ENCODE measurements at regions of chr17 and their contacts with region 1.

Region 1: DNA sequence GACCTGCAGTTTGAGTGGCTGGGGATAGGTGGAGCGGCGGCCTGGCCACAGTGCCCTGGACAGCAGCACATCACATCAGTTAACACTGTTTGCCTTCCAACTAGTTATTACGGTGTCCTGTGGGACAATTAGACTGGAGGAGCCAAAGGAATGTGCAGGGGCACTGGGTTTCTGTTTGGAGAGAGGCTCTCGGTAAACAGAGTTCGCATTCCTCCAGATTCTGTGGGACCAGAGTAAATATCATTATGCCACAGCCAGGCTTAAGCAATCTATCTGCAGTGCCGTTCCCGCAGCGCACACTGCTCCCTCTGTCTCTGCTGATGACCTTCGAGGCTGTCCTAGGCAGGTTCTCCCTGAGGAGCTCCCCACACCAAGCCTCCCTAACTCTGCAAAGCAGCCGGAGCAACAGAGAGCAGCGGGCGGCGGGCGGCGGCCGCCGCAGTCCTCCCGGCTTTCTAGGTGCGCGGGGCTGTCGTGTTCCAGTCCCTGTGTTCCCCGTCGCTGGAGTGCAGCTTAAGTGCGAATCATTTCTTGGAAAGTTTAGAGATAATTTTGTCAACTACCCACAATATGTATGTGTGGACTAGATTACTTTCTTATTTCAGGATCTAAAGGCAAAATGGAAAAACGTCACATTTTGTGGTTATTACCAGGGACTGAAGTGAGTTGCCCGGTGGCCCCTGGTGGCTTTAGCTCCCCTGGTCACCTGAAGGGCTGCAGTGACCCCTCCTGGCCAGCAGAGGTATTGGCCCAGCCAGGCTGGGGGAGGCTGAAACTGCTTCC is 43.2 kb downstream of the PGS1 start:
- DNase-seq: peak; percentile 65 to 95
- H3K4me3 ChIP-seq: no peak overlapping the region
- H3K27ac ChIP-seq: no peak overlapping the region
- H3K4me1 ChIP-seq: peaks cover 0 to 7% (median 0%) of the 10 kb centered on the region in 4 experiments; a peak in 3 of 7 replicates
- H3K27me3 ChIP-seq: no peaks in the 10 kb centered on the region
- CTCF ChIP-seq: peak; percentile 98 to 99 (median 99)
- EP300 ChIP-seq: no peak
- POLR2A ChIP-seq: no peak
- RAD21 ChIP-seq: peak; percentile 95 to 96

Region 2: GRCh38 chr17:78360371-78361224 is 61.1 kb before region 1 on chr17:
- CTCF ChIA-PET with region 1: interaction called, 257 read pairs
- POLR2A ChIA-PET with region 1: interaction called, 10 read pairs
- DNase-seq: peak; percentile 73 to 100
- H3K4me3 ChIP-seq: peak overlapping the region; percentile 58 to 81 (median 65)
- H3K27ac ChIP-seq: peak overlapping the region; percentile 25; the same call in 1 of the 2 replicates
- H3K4me1 ChIP-seq: peaks cover 16 to 53% (median 41%) of the 10 kb centered on the region in 4 experiments
- H3K27me3 ChIP-seq: peaks cover 0 to 18% (median 5%) of the 10 kb centered on the region in 4 experiments; a peak in 4 of 7 replicates
- CTCF ChIP-seq: peak; percentile 90 to 98 (median 92)
- EP300 ChIP-seq: peak in 1 of 2 experiments; percentile 35; a peak in 1 of 3 replicates
- POLR2A ChIP-seq: no peak
- RAD21 ChIP-seq: peak; percentile 79 to 89

Region 3: GRCh38 chr17:78390241-78391050 is 31.2 kb before region 1 on chr17:
- CTCF ChIA-PET with region 1: interaction called, 23 read pairs
- POLR2A ChIA-PET with region 1: no interaction called
- DNase-seq: no peak
- H3K4me3 ChIP-seq: no peak overlapping the region
- H3K27ac ChIP-seq: no peak overlapping the region
- H3K4me1 ChIP-seq: peaks cover 3 to 13% (median 8%) of the 10 kb centered on the region in 4 experiments
- H3K27me3 ChIP-seq: no peaks in the 10 kb centered on the region
- CTCF ChIP-seq: peak; percentile 26 to 42 (median 39); a peak in 2 of 4 replicates
- EP300 ChIP-seq: no peak
- POLR2A ChIP-seq: no peak
- RAD21 ChIP-seq: peak; percentile 28 to 48; a peak in 3 of 4 replicates

Region 4: GRCh38 chr17:78432226-78433012 is 10.7 kb after region 1 on chr17:
- CTCF ChIA-PET with region 1: interaction called, 14 read pairs
- POLR2A ChIA-PET with region 1: interaction called, 6 read pairs
- DNase-seq: no peak
- H3K4me3 ChIP-seq: no peak overlapping the region
- H3K27ac ChIP-seq: no peak overlapping the region
- H3K4me1 ChIP-seq: peaks cover 0 to 33% (median 20%) of the 10 kb centered on the region in 4 experiments; a peak in 6 of 7 replicates
- H3K27me3 ChIP-seq: no peaks in the 10 kb centered on the region
- CTCF ChIP-seq: no peak
- EP300 ChIP-seq: no peak
- POLR2A ChIP-seq: 0 out of 3 replicates have a peak, but pooled peaks of 1 of the 2 experiments have one; percentile 3
- RAD21 ChIP-seq: no peak

Region 5: GRCh38 chr17:78550464-78550863 is 128.8 kb after region 1 on chr17:
- CTCF ChIA-PET with region 1: no interaction called
- POLR2A ChIA-PET with region 1: no interaction called
- DNase-seq: no peak
- H3K4me3 ChIP-seq: no peak overlapping the region
- H3K27ac ChIP-seq: no peak overlapping the region
- H3K4me1 ChIP-seq: no peaks in the 10 kb centered on the region
- H3K27me3 ChIP-seq: no peaks in the 10 kb centered on the region
- CTCF ChIP-seq: no peak
- EP300 ChIP-seq: no peak
- POLR2A ChIP-seq: no peak
- RAD21 ChIP-seq: no peak

Measured in H1 (cell line).